Activated B cell treated with CpG ODN at 0.5 μM for 24 hours (primary cell): ENCODE measurements at regions of chr15 and their contacts with region 1.

Region 1: DNA sequence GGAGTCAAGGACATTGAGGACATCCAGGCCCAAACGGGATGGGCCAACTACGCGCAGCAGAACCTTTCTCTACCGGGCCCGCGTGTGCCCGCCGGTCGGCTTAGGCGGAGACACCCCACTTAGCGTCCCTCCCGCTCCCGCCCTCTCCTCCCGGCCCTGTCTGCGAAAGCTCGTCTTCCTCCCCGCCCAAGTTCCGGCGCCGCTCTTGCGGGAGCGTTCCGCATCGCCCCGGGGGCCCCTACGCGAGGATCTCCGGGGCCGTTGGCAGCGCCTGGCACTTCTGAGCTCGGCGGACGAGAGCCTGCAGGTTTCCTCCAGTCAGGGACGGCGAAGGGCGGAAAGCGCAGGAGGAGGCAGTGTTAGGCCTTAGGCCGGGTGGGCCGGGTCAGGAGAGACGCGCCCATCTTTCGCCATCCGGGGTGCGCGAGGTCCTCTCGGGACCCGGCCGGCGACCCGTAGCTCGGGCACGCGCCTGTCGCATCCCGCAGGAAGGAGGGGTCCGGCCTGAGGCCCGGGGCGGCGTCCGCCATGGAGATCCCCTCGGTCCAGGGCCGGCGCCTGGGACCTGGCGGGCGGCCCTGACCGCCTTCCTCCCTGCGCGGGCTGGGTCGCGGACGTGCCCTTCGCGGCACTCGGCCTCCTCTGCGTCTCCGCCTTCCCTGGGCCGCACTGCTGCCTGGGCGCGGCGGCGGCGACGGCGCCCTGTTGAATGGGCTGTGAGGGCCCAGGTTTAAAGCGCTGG is at the start of gene FEM1B:
- DNase-seq: peak; percentile 88
- ATAC-seq: peak; percentile 81
- H3K4me3 Mint-ChIP-seq: peak within 1 kb of the TSS; percentile 93
- H3K27ac Mint-ChIP-seq: peak within 1 kb of the TSS; percentile 96
- H3K4me1 Mint-ChIP-seq: peaks cover 55% of the 10 kb centered on the region
- H3K27me3 Mint-ChIP-seq: no peaks in the 10 kb centered on the region
- CTCF ChIP-seq: no peak
- total RNA-seq, gene FEM1B: 42.2 and 47.7 TPM in 2 replicates

Region 2: GRCh38 chr15:68229386-68230156 is 48.2 kb before region 1 on chr15 and contains the start of gene CLN6:
- CTCF ChIA-PET with region 1: no interaction called
- POLR2A ChIA-PET with region 1: interaction called, 34 read pairs
- intact Hi-C with region 1: loop called (anchors 1 kb)
- DNase-seq: peak; percentile 85
- ATAC-seq: peak; percentile 88
- H3K4me3 Mint-ChIP-seq: peak within 1 kb of the TSS; percentile 92
- H3K27ac Mint-ChIP-seq: peak within 1 kb of the TSS; percentile 89
- H3K4me1 Mint-ChIP-seq: peaks cover 50% of the 10 kb centered on the region
- H3K27me3 Mint-ChIP-seq: no peaks in the 10 kb centered on the region
- CTCF ChIP-seq: no peak
- total RNA-seq, gene CLN6: 35.0 and 37.5 TPM in 2 replicates

Region 3: GRCh38 chr15:68292157-68292781 is 14.5 kb after region 1 on chr15:
- CTCF ChIA-PET with region 1: no interaction called
- POLR2A ChIA-PET with region 1: interaction called, 13 read pairs
- intact Hi-C with region 1: no loop called
- DNase-seq: no peak
- ATAC-seq: no peak
- H3K4me3 Mint-ChIP-seq: no peak overlapping the region
- H3K27ac Mint-ChIP-seq: no peak overlapping the region
- H3K4me1 Mint-ChIP-seq: peaks cover 19% of the 10 kb centered on the region
- H3K27me3 Mint-ChIP-seq: no peaks in the 10 kb centered on the region
- CTCF ChIP-seq: no peak

Region 4: GRCh38 chr15:68304589-68305337 is 27.0 kb after region 1 on chr15:
- CTCF ChIA-PET with region 1: interaction called, 6 read pairs
- POLR2A ChIA-PET with region 1: interaction called, 5 read pairs
- intact Hi-C with region 1: loop called (anchors 1 kb)
- DNase-seq: no peak
- ATAC-seq: no peak
- H3K4me3 Mint-ChIP-seq: no peak overlapping the region
- H3K27ac Mint-ChIP-seq: no peak overlapping the region
- H3K4me1 Mint-ChIP-seq: peaks cover 8% of the 10 kb centered on the region
- H3K27me3 Mint-ChIP-seq: peaks cover 3% of the 10 kb centered on the region
- CTCF ChIP-seq: no peak

Region 5: DNA sequence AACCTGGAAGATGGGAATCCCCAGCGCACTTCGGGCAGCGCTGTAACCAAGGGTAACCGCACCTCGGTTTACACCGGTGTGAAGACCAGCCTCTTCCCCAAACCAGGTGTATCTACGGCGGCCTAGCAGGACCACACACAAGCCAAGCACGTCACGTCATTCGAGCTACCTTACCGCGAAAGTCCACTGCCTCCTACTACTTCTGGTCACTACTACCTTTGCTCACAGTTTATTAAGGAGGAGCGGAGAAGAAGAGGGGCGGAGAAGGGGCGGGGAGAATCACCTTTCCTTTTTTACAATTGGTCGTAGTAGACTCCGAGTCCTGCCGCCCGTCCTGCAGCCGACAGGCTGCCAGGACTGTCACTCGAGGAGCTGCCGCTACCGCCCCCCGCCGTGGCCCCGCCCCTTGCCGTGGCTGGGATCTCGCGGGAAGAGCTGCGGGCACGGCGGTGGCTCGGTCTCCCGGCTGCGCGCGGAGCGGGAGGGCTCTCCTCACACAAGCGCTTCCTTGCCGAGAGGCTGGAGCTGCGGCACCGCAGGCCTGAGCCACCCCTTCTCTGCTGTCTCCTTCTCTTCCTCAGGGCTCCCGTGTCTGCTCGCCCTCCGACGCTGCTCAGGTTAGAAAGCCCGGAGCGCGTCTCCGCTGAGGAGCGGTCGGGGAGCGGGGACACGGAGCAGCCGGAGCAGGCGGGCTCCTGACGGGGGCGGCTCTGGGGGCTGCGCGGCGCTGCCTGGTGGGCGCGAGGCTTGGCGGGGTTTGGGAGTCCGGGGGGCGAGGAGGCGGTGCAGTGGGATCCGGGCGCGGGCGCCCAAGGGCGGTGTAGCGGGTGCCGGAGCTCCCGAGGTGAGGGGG is 882.6 kb after region 1 on chr15 and contains the start of gene GLCE:
- CTCF ChIA-PET with region 1: no interaction called
- POLR2A ChIA-PET with region 1: no interaction called
- intact Hi-C with region 1: loop called (anchors 10 kb)
- DNase-seq: peak; percentile 94
- ATAC-seq: peak; percentile 93
- H3K4me3 Mint-ChIP-seq: peak within 1 kb of the TSS; percentile 90
- H3K27ac Mint-ChIP-seq: peak within 1 kb of the TSS; percentile 67
- H3K4me1 Mint-ChIP-seq: peaks cover 13% of the 10 kb centered on the region
- H3K27me3 Mint-ChIP-seq: peaks cover 8% of the 10 kb centered on the region
- CTCF ChIP-seq: no peak
- total RNA-seq, gene GLCE: 3.9 and 5.6 TPM in 2 replicates